Mammary epithelial cell (primary cell): ENCODE measurements at regions of chr3 and their contacts with region 1.

Region 1: GRCh38 chr3:23615068-23615467 is 190.7 kb upstream of the UBE2E1 start:
- DNase-seq: no peak
- H3K4me3 ChIP-seq: no peak overlapping the region
- H3K27ac ChIP-seq: no peak overlapping the region
- H3K4me1 ChIP-seq: peaks cover 10% of the 10 kb centered on the region
- H3K27me3 ChIP-seq: no peaks in the 10 kb centered on the region
- CTCF ChIP-seq: no peak

Region 2: GRCh38 chr3:23629181-23629893 is 14.3 kb after region 1 on chr3:
- CTCF ChIA-PET with region 1: no interaction called
- dilution Hi-C with region 1: no loop called
- in situ Hi-C with region 1: no loop called
- intact Hi-C with region 1: loop called (anchors 2 kb)
- DNase-seq: peak; percentile 32
- H3K4me3 ChIP-seq: no peak overlapping the region
- H3K27ac ChIP-seq: no peak overlapping the region
- H3K4me1 ChIP-seq: peaks cover 6% of the 10 kb centered on the region
- H3K27me3 ChIP-seq: no peaks in the 10 kb centered on the region
- CTCF ChIP-seq: no peak

Region 3: DNA sequence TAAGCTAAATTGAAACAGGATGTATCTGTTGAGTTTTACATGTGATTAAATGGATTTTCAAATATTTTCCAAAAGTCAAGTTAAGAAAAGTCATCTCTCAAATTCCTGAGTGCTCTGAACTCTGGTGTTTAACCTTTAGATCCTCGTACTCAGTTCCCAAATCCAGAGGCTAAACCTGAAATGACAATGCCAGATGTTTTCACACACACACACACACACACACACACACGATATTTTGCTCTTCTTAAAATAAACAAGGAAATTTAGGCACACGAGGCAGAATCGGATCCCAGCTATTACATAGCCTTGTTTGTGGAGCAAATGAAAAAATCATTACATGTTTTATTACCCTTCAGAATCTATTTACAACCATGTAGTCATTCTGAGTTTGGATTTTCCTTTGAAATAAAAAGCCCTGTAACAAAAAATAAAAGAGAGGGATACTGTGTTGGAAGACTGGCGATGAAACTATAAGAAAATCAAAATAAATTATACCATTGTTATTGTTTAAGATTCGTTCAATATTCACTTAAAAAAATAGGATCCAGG is 170.1 kb after region 1 on chr3:
- CTCF ChIA-PET with region 1: no interaction called
- dilution Hi-C with region 1: no loop called
- in situ Hi-C with region 1: no loop called
- intact Hi-C with region 1: no loop called
- DNase-seq: no peak
- H3K4me3 ChIP-seq: no peak overlapping the region
- H3K27ac ChIP-seq: no peak overlapping the region
- H3K4me1 ChIP-seq: no peaks in the 10 kb centered on the region
- H3K27me3 ChIP-seq: no peaks in the 10 kb centered on the region
- CTCF ChIP-seq: no peak